Left colon (tissue), 2 donors: ENCODE measurements at regions of chr3 and their contacts with region 1.

Region 1: GRCh38 chr3:122942937-122943827 is 84.4 kb downstream of the SEMA5B start:
- DNase-seq: peak; percentile 41 to 69
- ATAC-seq: peak; percentile 94

Region 2: GRCh38 chr3:123028233-123028828 is 85.1 kb after region 1 on chr3:
- intact Hi-C with region 1: loop called in 1 of 2 experiments (anchors 10 kb)
- DNase-seq: peak; percentile 13 to 26
- ATAC-seq: peak; percentile 48